ENCODE measurements at regions of chr5 and their contacts with region 1.

Region 1: GRCh38 chr5:10307206-10308148 is at the start of gene CMBL:
- DNase-seq: peak; percentile 56 to 94
- H3K4me3 ChIP-seq: peak within 1 kb of the TSS; percentile 79
- H3K27ac ChIP-seq: peak within 1 kb of the TSS; percentile 79
- H3K4me1 ChIP-seq: peaks cover 44% of the 10 kb centered on the region
- H3K27me3 ChIP-seq: no peaks in the 10 kb centered on the region
- CTCF ChIP-seq: no peak
- total RNA-seq, gene CMBL: 286 and 294 TPM in 2 replicates

Region 2: DNA sequence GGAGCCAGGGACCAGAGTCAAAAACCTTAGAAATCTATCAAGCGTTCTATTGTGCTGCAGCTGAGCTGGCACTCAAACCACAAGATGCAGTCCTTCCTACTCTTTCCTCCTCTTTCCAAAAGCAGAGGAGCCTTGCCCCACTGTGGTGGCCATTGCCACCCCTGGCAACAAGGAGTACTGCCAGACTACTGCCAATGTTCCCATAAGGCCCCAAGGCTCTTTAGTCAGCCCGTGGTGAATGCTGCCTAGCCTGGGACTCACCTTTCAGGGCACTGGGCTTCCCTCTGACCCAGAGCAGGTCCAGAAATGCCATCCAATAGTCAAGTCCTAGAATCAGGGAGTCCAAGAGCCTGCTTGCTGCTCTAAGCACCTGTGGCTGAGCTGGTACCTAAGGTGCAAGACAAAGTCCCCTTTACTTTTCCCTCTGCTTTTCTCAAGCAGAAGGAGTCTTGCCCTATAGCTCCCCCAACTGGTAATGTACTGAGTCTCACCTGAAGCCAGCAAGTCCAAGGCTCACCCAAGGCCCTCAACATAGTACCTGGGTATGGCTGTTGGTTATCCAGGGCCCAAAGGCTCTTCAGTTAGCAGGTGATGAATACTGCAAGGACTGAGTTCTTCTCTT is 277.2 kb before region 1 on chr5:
- CTCF ChIA-PET with region 1: no interaction called
- POLR2A ChIA-PET with region 1: no interaction called
- intact Hi-C with region 1: no loop called
- DNase-seq: no peak
- H3K4me3 ChIP-seq: no peak overlapping the region
- H3K27ac ChIP-seq: no peak overlapping the region
- H3K4me1 ChIP-seq: no peaks in the 10 kb centered on the region
- H3K27me3 ChIP-seq: no peaks in the 10 kb centered on the region
- CTCF ChIP-seq: peak; percentile 68

Region 3: GRCh38 chr5:10249948-10250803 is 57.3 kb before region 1 on chr5 and contains the start of gene CCT5:
- CTCF ChIA-PET with region 1: no interaction called
- POLR2A ChIA-PET with region 1: no interaction called
- intact Hi-C with region 1: loop called (anchors 1 kb)
- DNase-seq: peak; percentile 97 to 98
- H3K4me3 ChIP-seq: peak within 1 kb of the TSS; percentile 100
- H3K27ac ChIP-seq: peak within 1 kb of the TSS; percentile 91
- H3K4me1 ChIP-seq: peaks cover 17% of the 10 kb centered on the region
- H3K27me3 ChIP-seq: no peaks in the 10 kb centered on the region
- CTCF ChIP-seq: no peak
- total RNA-seq, gene CCT5: 658 and 831 TPM in 2 replicates

Region 4: GRCh38 chr5:10333154-10334006 is 25.9 kb after region 1 on chr5:
- CTCF ChIA-PET with region 1: no interaction called
- POLR2A ChIA-PET with region 1: no interaction called
- intact Hi-C with region 1: loop called (anchors 2 kb)
- DNase-seq: peak in 1 of 2 experiments; percentile 67
- H3K4me3 ChIP-seq: peak overlapping the region; percentile 60
- H3K27ac ChIP-seq: no peak overlapping the region
- H3K4me1 ChIP-seq: peaks cover 5% of the 10 kb centered on the region; the same call in 1 of the 2 replicates
- H3K27me3 ChIP-seq: peaks cover 11% of the 10 kb centered on the region; the same call in 1 of the 2 replicates
- CTCF ChIP-seq: no peak

Region 5: DNA sequence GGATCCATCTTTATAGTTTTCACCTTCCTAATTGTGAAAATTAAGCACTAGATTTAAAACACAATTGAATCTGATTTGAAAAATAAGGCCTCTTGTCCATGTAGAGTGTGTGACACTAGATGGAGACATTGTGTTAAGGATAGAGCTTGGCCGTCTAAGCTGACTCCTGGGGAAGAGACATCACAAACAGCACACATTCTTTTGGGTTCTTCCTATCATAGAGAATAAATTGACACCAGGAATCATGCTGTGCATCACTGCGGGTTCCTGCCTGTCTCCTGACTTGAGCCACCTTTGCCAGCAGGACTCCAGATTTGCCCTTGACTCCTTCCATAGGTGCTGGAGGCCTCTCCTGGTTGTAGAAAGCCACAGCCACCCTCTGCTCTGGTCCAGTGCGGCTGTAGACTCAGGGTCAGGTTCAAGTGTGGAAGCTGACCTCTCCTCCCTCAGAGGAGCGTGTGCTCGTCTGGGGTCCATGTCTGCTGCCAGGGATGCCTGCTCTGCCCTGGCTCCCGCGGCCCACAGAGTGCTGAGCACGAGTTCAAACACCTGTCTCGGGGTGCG is 145.4 kb after region 1 on chr5:
- CTCF ChIA-PET with region 1: no interaction called
- POLR2A ChIA-PET with region 1: no interaction called
- intact Hi-C with region 1: no loop called
- DNase-seq: peak; percentile 62 to 77
- H3K4me3 ChIP-seq: no peak overlapping the region
- H3K27ac ChIP-seq: peak overlapping the region; percentile 72
- H3K4me1 ChIP-seq: peaks cover 43% of the 10 kb centered on the region
- H3K27me3 ChIP-seq: no peaks in the 10 kb centered on the region
- CTCF ChIP-seq: peak; percentile 95

Region 6: DNA sequence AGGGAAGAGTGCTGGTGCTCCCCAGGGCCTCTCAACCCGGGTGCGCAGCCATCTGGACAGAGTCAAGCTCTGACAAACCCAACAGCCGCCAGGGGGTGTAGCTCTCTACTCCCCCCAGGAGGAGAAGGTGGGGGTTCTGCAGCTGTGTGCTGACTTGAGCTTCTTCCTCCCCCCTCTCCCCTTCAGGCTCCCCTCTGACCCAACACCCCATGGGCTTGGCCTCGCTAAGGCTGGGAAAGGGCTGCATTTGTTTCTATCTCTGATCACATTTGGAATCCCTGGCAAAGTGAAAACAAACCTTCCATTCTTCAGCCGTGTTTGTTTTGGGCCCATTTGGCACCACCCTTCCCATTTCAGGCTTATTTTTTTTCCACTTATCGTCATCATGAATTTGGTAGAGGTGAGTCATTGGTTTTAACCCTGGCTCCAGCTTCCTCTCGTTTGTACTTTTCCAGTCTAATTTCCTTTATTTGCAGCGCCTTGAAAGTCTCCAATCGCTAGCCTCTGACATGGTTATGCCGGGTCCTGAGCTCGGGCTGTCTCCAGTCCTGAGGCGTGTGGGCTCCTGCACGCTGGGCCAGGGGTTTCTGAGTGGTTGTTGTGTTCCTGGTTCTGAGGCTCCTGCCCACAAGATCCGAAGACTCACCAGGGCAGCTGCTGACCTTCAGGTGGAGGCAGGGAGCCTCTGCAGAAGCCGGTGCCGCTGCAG is 417.5 kb after region 1 on chr5:
- CTCF ChIA-PET with region 1: no interaction called
- POLR2A ChIA-PET with region 1: no interaction called
- intact Hi-C with region 1: loop called (anchors 5 kb)
- DNase-seq: peak; percentile 86 to 97
- H3K4me3 ChIP-seq: peak overlapping the region; percentile 43; the same call in 1 of the 2 replicates
- H3K27ac ChIP-seq: peak overlapping the region; percentile 91
- H3K4me1 ChIP-seq: peaks cover 78% of the 10 kb centered on the region
- H3K27me3 ChIP-seq: no peaks in the 10 kb centered on the region
- CTCF ChIP-seq: peak; percentile 69

Region 7: DNA sequence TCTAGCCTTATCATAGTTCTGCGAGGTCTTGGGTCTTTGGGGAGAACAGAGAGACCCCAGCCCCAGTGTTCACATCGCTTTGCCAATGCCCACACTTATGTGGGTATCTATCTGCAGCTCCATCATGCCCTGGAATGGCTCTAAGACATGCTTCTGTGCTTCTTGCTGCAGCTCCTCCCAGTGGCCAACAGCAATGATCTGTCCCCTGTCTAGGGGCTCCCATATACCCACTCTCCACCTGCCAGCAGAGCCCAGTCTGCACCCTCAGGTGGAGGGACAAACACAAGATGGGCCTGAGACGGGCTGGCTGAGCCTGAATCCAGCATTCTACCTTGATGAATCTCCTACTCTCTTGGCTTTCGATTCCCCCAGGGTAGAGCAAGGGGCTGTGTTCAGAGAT is 468.2 kb after region 1 on chr5:
- CTCF ChIA-PET with region 1: interaction called, 3 read pairs
- POLR2A ChIA-PET with region 1: interaction called, 11 read pairs
- intact Hi-C with region 1: no loop called
- DNase-seq: no peak
- H3K4me3 ChIP-seq: no peak overlapping the region
- H3K27ac ChIP-seq: no peak overlapping the region
- H3K4me1 ChIP-seq: no peaks in the 10 kb centered on the region
- H3K27me3 ChIP-seq: no peaks in the 10 kb centered on the region
- CTCF ChIP-seq: no peak